ENCODE measurements at regions of chr1 and their contacts with region 1.

Region 1: GRCh38 chr1:205321164-205321958 is at the start of gene NUAK2:
- DNase-seq: peak; percentile 94
- H3K4me3 ChIP-seq: peak within 1 kb of the TSS; percentile 78 to 95
- H3K27ac ChIP-seq: peak within 1 kb of the TSS in 1 of 2 experiments; percentile 75; a peak in 2 of 4 replicates
- H3K4me1 ChIP-seq: peaks cover 19 to 31% of the 10 kb centered on the region in 2 experiments
- H3K27me3 ChIP-seq: no peaks in the 10 kb centered on the region
- CTCF ChIP-seq: peak; percentile 45
- EP300 ChIP-seq: no peak
- RAD21 ChIP-seq: no peak
- polyA plus RNA-seq, gene NUAK2: 6.8 and 11.1 TPM in 2 replicates

Region 2: GRCh38 chr1:204950353-204951001 is 370.9 kb before region 1 on chr1:
- CTCF ChIA-PET with region 1: no interaction called
- POLR2A ChIA-PET with region 1: no interaction called
- DNase-seq: no peak
- H3K4me3 ChIP-seq: no peak overlapping the region
- H3K27ac ChIP-seq: no peak overlapping the region
- H3K4me1 ChIP-seq: no peaks in the 10 kb centered on the region
- H3K27me3 ChIP-seq: no peaks in the 10 kb centered on the region
- CTCF ChIP-seq: no peak
- EP300 ChIP-seq: no peak
- RAD21 ChIP-seq: no peak

Region 3: GRCh38 chr1:205304695-205305070 is 16.7 kb before region 1 on chr1:
- CTCF ChIA-PET with region 1: interaction called, 10 read pairs
- POLR2A ChIA-PET with region 1: no interaction called
- DNase-seq: no peak
- H3K4me3 ChIP-seq: no peak overlapping the region
- H3K27ac ChIP-seq: peak overlapping the region in 1 of 2 experiments; percentile 97; a peak in 1 of 4 replicates
- H3K4me1 ChIP-seq: peaks cover 3 to 25% of the 10 kb centered on the region in 2 experiments; a peak in 3 of 4 replicates
- H3K27me3 ChIP-seq: no peaks in the 10 kb centered on the region
- CTCF ChIP-seq: no peak
- EP300 ChIP-seq: no peak
- RAD21 ChIP-seq: no peak

Region 4: DNA sequence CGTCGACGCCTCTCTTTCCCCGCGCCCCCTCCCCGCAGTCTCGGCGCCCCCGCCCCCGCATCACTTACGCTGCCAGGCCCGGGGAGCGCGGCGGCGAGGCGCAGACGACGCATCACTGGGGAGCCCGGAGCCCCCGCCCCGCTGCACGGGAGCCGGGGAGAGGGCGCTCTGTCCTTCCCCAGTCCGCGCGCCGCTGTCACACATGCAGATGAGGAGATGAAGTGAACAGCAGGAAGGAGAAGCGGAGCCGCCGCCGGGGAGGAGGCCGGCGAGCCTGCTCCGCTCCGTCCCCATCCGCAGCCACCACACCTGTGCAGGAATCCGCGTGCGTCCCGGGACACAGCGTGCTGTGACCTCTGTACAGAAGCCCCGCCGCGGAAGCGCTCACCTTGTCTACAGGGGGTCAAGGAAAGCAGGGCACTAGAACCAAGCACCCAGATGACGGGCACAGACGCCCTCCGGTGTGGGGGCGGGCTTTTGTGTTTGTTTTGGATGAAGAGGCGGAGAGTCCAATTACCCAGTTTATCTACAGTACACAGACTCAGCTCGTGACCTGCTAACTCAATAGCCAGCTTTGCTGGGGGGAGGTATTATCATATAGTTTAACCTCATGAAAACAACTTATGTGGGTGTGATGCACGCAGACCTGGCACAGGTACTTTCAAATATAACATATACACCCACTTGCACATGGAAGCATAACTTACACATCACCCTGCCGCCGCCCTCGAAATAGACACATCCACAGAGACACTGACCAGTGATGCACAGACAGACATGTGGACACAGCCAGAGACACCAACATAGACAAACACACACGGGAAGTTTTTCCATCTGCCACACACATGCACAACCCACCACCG is 22.9 kb after region 1 on chr1:
- CTCF ChIA-PET with region 1: interaction called, 16 read pairs
- POLR2A ChIA-PET with region 1: no interaction called
- DNase-seq: peak; percentile 77
- H3K4me3 ChIP-seq: peak overlapping the region; percentile 41 to 56
- H3K27ac ChIP-seq: no peak overlapping the region
- H3K4me1 ChIP-seq: peaks cover 0 to 7% of the 10 kb centered on the region in 2 experiments; a peak in 1 of 4 replicates
- H3K27me3 ChIP-seq: peaks cover 11% of the 10 kb centered on the region; the same call in 1 of the 2 replicates
- CTCF ChIP-seq: no peak
- EP300 ChIP-seq: no peak
- RAD21 ChIP-seq: no peak

Measured in SK-N-SH (cell line).